Activated T-helper 2 cell treated with anti-CD3 and anti-CD28 coated beads, Interferon-gamma antibody, Interleukin-2, Interleukin-4, amounts not matched to agents 10 μg/mL and 5 μg/mL and 100 μg/mL, durations not matched to agents 14 hours and 24 hours and 36 hours (primary cell): ENCODE measurements at regions of chrX and their contacts with region 1.

Region 1: GRCh38 chrX:24024819-24025740 is 1.9 kb downstream of the KLHL15 start:
- DNase-seq: peak; percentile 76
- H3K4me3 Mint-ChIP-seq: peak overlapping the region; percentile 91
- H3K27ac Mint-ChIP-seq: peak overlapping the region; percentile 55
- H3K4me1 Mint-ChIP-seq: peaks cover 22% of the 10 kb centered on the region
- H3K27me3 Mint-ChIP-seq: peaks cover 3% of the 10 kb centered on the region

Region 2: GRCh38 chrX:23515028-23515427 is 510.1 kb before region 1 on chrX:
- intact Hi-C with region 1: no loop called
- DNase-seq: no peak
- H3K4me3 Mint-ChIP-seq: no peak overlapping the region
- H3K27ac Mint-ChIP-seq: no peak overlapping the region
- H3K4me1 Mint-ChIP-seq: no peaks in the 10 kb centered on the region
- H3K27me3 Mint-ChIP-seq: no peaks in the 10 kb centered on the region

Region 3: DNA sequence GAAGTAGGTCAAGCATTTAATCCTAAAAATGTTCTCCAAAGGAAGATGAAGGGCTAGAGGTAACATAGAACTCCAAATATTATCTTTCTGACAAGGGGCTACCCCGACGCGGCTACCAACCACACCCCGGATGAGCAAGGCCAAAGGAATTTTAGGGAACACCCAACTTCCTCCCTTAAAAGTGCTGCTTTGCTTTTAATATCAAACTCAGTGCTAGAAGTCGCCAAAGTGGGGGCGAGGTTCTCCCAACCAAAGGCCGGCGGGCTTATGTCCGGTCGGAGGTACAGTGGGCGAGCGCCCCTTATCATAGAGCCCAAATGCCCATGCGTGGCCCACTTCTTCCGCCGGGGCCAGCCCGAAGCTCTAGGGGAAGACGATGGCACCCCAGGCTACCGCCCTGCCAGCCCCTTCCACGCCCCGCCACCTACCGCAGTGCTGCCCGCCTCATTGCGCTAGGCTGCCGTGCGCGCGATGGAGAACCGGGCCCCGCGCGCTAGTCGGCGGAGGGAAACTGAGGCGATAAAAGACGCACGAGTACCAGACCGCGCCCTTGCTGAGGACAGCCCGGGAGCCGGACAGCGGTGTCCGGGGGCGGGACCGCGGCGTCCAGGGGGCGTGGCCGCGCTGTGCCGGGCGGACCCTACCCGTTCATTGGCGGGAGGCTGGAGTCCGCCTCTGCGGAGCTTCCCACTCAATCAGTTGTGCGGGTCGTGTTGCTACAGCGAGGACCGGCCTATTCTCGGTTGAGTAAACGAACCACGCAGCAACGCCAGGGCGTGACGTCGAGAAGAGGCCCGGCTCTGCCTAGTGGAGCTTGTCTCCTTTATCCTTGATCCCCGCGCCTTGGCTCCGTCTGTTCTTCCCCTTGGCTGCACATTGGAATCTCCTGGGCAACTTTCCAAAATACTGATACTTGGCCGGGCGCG is 282.1 kb before region 1 on chrX and contains the start of gene ACOT9:
- intact Hi-C with region 1: loop called (anchors 10 kb)
- DNase-seq: peak; percentile 75
- H3K4me3 Mint-ChIP-seq: peak within 1 kb of the TSS; percentile 94
- H3K27ac Mint-ChIP-seq: peak within 1 kb of the TSS; percentile 90
- H3K4me1 Mint-ChIP-seq: peaks cover 19% of the 10 kb centered on the region
- H3K27me3 Mint-ChIP-seq: no peaks in the 10 kb centered on the region
- total RNA-seq, gene ACOT9: 75.2 and 76.0 TPM in 2 replicates

Region 4: DNA sequence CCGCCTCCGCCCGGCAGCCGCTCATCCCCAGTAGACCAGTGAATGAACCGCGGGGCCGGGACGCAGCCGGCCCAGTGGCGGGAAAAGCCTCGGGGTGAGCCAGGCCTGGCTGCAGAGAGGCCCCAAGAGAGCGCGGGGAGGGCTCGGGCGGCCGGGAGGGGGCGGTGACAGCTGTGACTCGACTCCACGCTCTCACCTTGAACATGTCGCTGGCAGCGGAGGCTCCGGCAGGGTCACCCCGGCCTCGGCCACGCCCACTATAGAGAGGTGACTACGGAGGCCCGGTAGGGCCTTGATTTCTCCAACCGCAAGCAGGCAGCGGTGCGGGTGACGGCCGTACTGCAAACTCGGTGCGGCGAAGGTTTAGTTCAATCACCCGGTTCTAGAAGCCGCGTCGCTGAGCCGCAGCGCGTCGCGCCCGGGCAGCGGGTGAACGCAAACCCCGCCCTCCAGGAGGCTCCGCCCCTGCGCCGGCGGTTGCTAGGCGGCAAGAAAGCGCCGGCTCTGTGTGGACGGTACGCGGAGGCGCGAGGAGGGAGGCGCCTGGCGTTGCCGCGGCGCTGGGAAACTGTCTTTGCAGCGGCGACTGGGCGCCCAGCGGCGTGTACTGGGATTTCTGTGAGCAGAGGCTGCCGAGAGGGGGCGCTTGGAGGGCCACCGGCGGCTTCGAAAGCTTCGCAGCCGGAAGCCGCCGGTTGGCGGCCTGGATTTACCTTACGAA is 117.4 kb before region 1 on chrX and contains the starts of genes APOO and CXorf58:
- intact Hi-C with region 1: loop called (anchors 1 kb)
- DNase-seq: peak; percentile 90
- H3K4me3 Mint-ChIP-seq: peak within 1 kb of the TSS; percentile 77
- H3K27ac Mint-ChIP-seq: peak within 1 kb of the TSS; percentile 85
- H3K4me1 Mint-ChIP-seq: peaks cover 22% of the 10 kb centered on the region
- H3K27me3 Mint-ChIP-seq: no peaks in the 10 kb centered on the region
- total RNA-seq, gene APOO: 21.9 and 22.4 TPM in 2 replicates
- total RNA-seq, gene CXorf58: 0.21 TPM in 1 of 2 replicates, not detected in the other

Region 5: GRCh38 chrX:23930894-23931689 is 94.0 kb before region 1 on chrX:
- intact Hi-C with region 1: loop called (anchors 1 kb)
- DNase-seq: no peak
- H3K4me3 Mint-ChIP-seq: peak overlapping the region; percentile 30
- H3K27ac Mint-ChIP-seq: peak overlapping the region; percentile 79
- H3K4me1 Mint-ChIP-seq: peaks cover 16% of the 10 kb centered on the region
- H3K27me3 Mint-ChIP-seq: no peaks in the 10 kb centered on the region

Region 6: DNA sequence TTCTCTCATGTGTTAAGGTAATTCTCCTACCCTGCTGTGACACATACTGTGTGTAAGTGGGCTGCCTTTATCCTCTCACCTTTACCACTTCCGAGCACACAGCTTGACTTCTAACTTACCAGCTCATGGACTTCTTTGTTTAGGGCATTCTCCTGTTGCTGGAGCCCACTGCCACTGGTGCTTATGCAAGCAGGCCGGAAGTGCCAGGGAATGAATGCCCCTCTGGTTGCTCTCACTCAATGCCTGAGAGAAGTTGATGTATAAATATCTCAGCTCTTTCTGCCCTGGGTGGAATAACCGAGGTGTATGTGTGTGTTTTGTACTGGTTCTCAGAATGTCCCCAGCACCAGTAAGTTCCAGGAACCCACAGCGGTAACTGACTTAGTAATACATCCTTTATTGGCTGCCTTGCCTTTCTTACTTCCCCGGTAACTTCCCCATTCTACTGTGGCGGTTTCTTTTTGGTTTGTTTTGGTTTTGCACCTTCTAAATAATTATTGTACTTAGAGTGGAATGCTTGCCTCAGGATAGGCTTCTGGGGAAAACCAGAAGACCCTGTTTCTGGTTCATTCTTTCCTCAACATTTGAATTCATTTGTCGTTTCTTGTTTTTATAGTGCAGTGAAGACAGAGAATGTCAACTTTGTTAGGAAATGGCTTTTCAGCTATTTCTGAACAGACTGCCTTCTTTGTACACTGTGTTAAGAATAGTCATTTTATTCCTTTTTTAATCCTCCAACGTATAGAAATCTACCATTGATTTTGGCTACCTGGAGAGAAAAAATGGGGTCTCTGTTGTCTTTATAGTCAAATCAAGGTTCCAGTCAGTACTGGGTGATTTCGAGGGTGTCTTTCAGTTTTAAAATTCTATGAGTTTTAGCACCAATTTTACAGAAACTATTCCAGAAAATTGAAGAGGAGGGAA is 71.8 kb before region 1 on chrX:
- intact Hi-C with region 1: loop called (anchors 5 kb)
- DNase-seq: peak; percentile 34
- H3K4me3 Mint-ChIP-seq: peak overlapping the region; percentile 83
- H3K27ac Mint-ChIP-seq: peak overlapping the region; percentile 95
- H3K4me1 Mint-ChIP-seq: peaks cover 27% of the 10 kb centered on the region
- H3K27me3 Mint-ChIP-seq: no peaks in the 10 kb centered on the region

Region 7: GRCh38 chrX:24014388-24015018 is 10.6 kb before region 1 on chrX:
- intact Hi-C with region 1: loop called (anchors 1 kb)
- DNase-seq: no peak
- H3K4me3 Mint-ChIP-seq: peak overlapping the region; percentile 64
- H3K27ac Mint-ChIP-seq: peak overlapping the region; percentile 83
- H3K4me1 Mint-ChIP-seq: peaks cover 35% of the 10 kb centered on the region
- H3K27me3 Mint-ChIP-seq: no peaks in the 10 kb centered on the region